IMR-90 (cell line): ENCODE measurements at regions of chr7 and their contacts with region 1.

Region 1: GRCh38 chr7:87876040-87876868 is at the starts of genes DBF4 and SLC25A40:
- DNase-seq: peak; percentile 89
- ATAC-seq: peak; percentile 95
- H3K4me3 ChIP-seq: peak within 1 kb of the TSS; percentile 61
- H3K27ac ChIP-seq: peak within 1 kb of the TSS; percentile 39
- H3K4me1 ChIP-seq: no peaks in the 10 kb centered on the region
- H3K27me3 ChIP-seq: no peaks in the 10 kb centered on the region
- CTCF ChIP-seq: no peak
- POLR2A ChIP-seq: peak; percentile 86
- RAD21 ChIP-seq: no peak
- total RNA-seq, gene DBF4: 7.2 and 20.3 TPM in 2 replicates
- total RNA-seq, gene SLC25A40: 4.7 and 8.6 TPM in 2 replicates

Region 2: GRCh38 chr7:87574630-87575029 is 301.6 kb before region 1 on chr7:
- CTCF ChIA-PET with region 1: no interaction called
- POLR2A ChIA-PET with region 1: no interaction called
- dilution Hi-C with region 1: no loop called
- in situ Hi-C with region 1: no loop called
- intact Hi-C with region 1: loop called (anchors 5 kb)
- DNase-seq: peak; percentile 86
- ATAC-seq: peak; percentile 52
- H3K4me3 ChIP-seq: no peak overlapping the region
- H3K27ac ChIP-seq: no peak overlapping the region
- H3K4me1 ChIP-seq: peaks cover 3% of the 10 kb centered on the region; the same call in 1 of the 2 replicates
- H3K27me3 ChIP-seq: no peaks in the 10 kb centered on the region
- CTCF ChIP-seq: no peak
- POLR2A ChIP-seq: no peak
- RAD21 ChIP-seq: no peak

Region 3: DNA sequence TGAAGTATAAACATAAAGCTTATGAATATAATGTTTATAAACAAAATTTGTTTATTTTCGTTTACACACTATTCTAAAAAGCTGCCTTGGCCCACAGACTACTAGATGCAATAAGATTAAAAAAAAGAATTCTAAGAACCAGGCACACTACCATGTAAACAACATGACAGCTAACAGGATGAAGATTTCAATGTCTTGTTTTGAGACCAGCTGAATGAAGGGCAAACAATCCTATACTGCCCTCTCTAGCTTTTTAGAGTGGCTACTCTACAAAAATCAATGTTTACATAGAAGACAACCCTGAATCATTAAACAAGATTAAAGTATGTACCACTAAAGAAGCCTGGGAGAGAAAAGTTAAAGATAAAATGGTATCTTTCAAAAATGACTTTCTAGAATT is 38.7 kb before region 1 on chr7:
- CTCF ChIA-PET with region 1: no interaction called
- POLR2A ChIA-PET with region 1: no interaction called
- dilution Hi-C with region 1: no loop called
- in situ Hi-C with region 1: no loop called
- intact Hi-C with region 1: loop called (anchors 5 kb)
- DNase-seq: no peak
- ATAC-seq: no peak; the same call in none of the 2 replicates
- H3K4me3 ChIP-seq: no peak overlapping the region
- H3K27ac ChIP-seq: no peak overlapping the region
- H3K4me1 ChIP-seq: 0 out of 2 replicates have a peak, but pooled peaks cover 2% of the 10 kb centered on the region
- H3K27me3 ChIP-seq: no peaks in the 10 kb centered on the region
- CTCF ChIP-seq: no peak
- POLR2A ChIP-seq: no peak
- RAD21 ChIP-seq: no peak